ENCODE measurements at regions of chr2 and their contacts with region 1.

Region 1: GRCh38 chr2:149630445-149630844 is 42.9 kb upstream of the MMADHC start:
- DNase-seq: no peak
- ATAC-seq: no peak
- H3K4me3 ChIP-seq: no peak overlapping the region
- H3K27ac ChIP-seq: no peak overlapping the region
- H3K4me1 ChIP-seq: no peaks in the 10 kb centered on the region
- H3K27me3 ChIP-seq: no peaks in the 10 kb centered on the region
- CTCF ChIP-seq: no peak
- POLR2A ChIP-seq: no peak

Region 2: GRCh38 chr2:149715005-149715592 is 84.7 kb after region 1 on chr2:
- in situ Hi-C with region 1: loop called in 1 of 4 experiments (anchors 10 kb)
- intact Hi-C with region 1: no loop called
- DNase-seq: no peak
- ATAC-seq: no peak
- H3K4me3 ChIP-seq: no peak overlapping the region
- H3K27ac ChIP-seq: no peak overlapping the region
- H3K4me1 ChIP-seq: no peaks in the 10 kb centered on the region
- H3K27me3 ChIP-seq: no peaks in the 10 kb centered on the region
- CTCF ChIP-seq: no peak
- POLR2A ChIP-seq: no peak

Measured in gastrocnemius medialis (tissue), 4 donors.